SK-N-SH (cell line): ENCODE measurements at regions of chr20 and their contacts with region 1.

Region 1: GRCh38 chr20:2005831-2006426 is 12.1 kb upstream of the PDYN start:
- DNase-seq: no peak
- H3K4me3 ChIP-seq: no peak overlapping the region
- H3K27ac ChIP-seq: no peak overlapping the region
- H3K4me1 ChIP-seq: no peaks in the 10 kb centered on the region
- H3K27me3 ChIP-seq: no peaks in the 10 kb centered on the region; the same call in 1 of the 2 replicates
- CTCF ChIP-seq: no peak
- EP300 ChIP-seq: no peak
- RAD21 ChIP-seq: no peak

Region 2: GRCh38 chr20:1973601-1974440 is 32.1 kb before region 1 on chr20:
- CTCF ChIA-PET with region 1: interaction called, 10 read pairs
- POLR2A ChIA-PET with region 1: no interaction called
- DNase-seq: no peak
- H3K4me3 ChIP-seq: no peak overlapping the region
- H3K27ac ChIP-seq: no peak overlapping the region
- H3K4me1 ChIP-seq: no peaks in the 10 kb centered on the region
- H3K27me3 ChIP-seq: peaks cover 23% of the 10 kb centered on the region; the same call in 1 of the 2 replicates
- CTCF ChIP-seq: no peak
- EP300 ChIP-seq: no peak
- RAD21 ChIP-seq: no peak

Region 3: DNA sequence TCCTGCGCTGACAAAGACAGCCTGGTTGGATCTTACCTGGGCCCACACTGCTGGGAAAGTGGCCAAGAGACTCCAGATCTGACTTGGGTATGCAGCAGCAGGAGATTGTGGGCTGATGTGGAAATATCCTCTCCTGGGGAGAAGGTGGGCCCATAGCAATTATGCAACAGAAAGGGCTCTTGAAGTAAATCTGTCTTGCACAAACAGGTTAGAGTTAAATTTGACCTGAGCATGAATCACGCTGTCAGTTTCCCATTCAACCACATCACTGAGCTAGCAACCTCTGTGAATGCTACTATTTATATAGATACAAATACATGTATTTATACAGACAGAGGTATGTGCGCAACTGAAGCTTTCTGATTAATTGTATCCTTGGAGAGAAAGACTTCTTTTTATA is 16.2 kb after region 1 on chr20:
- CTCF ChIA-PET with region 1: interaction called, 37 read pairs
- POLR2A ChIA-PET with region 1: no interaction called
- DNase-seq: no peak
- H3K4me3 ChIP-seq: no peak overlapping the region
- H3K27ac ChIP-seq: no peak overlapping the region
- H3K4me1 ChIP-seq: no peaks in the 10 kb centered on the region
- H3K27me3 ChIP-seq: no peaks in the 10 kb centered on the region; the same call in 1 of the 2 replicates
- CTCF ChIP-seq: no peak
- EP300 ChIP-seq: no peak
- RAD21 ChIP-seq: no peak

Region 4: DNA sequence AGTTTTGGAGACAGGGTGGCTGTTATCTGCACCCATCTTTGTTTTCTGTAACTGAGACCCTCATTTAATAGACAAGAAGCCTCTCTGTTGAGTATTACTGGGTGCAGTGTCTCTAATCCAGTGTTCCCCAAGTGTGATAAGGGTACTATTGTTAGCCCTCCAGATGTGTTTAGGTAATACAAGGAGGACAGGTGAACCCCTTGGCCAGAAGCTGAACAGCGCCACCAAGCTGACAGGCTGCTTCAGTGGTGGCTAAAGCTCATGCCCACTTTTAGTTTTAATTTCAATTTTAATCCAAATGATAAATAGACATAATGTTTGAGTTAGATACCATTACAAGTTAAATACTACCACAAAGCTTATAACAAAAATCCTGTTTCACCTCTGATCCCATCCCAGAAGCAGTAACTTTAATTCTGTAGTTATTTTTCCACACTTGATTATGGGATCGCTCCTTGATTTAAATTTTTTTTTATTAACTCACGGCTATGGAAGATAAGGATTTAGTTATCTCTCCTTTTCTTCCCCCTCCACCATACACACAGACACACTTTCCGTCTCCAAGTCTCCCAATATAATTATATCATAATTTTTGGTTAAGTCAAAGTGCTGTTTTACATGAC is 87.3 kb after region 1 on chr20:
- CTCF ChIA-PET with region 1: interaction called, 28 read pairs
- POLR2A ChIA-PET with region 1: no interaction called
- DNase-seq: peak; percentile 36
- H3K4me3 ChIP-seq: no peak overlapping the region; a peak in 1 of 4 replicates
- H3K27ac ChIP-seq: no peak overlapping the region
- H3K4me1 ChIP-seq: no peaks in the 10 kb centered on the region
- H3K27me3 ChIP-seq: peaks cover 26% of the 10 kb centered on the region
- CTCF ChIP-seq: peak; percentile 70
- EP300 ChIP-seq: no peak
- RAD21 ChIP-seq: peak; percentile 67